ENCODE measurements at regions of chr12 and their contacts with region 1.

Region 1: DNA sequence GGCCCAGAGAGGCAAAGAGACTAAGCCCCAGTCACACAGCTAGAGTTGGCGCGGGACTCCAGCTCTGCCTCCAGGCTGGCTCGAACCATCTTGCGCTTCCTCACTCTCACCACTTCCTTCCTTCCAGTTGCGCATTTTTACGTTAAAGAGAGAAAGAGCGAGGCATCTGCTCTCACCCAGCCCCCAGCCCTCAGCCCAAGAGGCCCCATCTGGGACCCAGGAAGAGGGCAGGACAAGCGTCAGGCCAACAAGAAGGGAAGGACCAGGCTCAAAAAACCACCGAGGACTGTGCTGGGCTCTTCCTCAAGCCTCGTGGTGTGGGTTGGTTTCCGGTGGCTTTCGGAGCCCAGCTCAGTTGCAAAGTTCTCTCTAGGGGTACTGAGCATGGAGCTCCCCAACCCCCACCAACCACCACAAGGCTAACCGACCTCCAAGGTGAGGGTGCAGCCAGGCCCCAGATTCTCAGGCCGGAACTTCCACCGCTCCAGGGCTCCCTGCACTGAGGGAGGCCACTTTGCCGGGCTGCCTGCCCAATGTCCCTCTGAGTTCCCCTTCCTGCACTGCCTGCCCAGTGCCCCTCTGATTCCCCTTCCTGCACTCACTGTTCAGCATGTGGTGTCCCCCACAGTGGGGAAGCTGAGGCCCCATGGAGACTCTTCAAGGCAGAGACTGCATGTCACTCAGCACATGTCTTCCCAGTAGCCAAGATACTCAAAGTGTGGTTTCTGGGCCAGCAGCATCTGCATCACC is 35.9 kb downstream of the TESC start:
- DNase-seq: peak; percentile 12 to 56 (median 38)
- H3K4me3 ChIP-seq: peak overlapping the region; percentile 43
- H3K4me3 Mint-ChIP-seq: peak overlapping the region; percentile 71 to 84 (median 80)
- H3K27ac ChIP-seq: no peak overlapping the region
- H3K27ac Mint-ChIP-seq: peak overlapping the region; percentile 78 to 96 (median 90)
- H3K4me1 ChIP-seq: peaks cover 25% of the 10 kb centered on the region
- H3K4me1 Mint-ChIP-seq: peaks cover 39 to 52% (median 41%) of the 10 kb centered on the region in 3 donors
- H3K27me3 ChIP-seq: no peaks in the 10 kb centered on the region
- H3K27me3 Mint-ChIP-seq: peaks cover 0 to 1% of the 10 kb centered on the region in 2 donors

Region 2: GRCh38 chr12:117098361-117099217 is 35.3 kb after region 1 on chr12:
- CTCF ChIA-PET with region 1: interaction called, 3 read pairs
- POLR2A ChIA-PET with region 1: interaction called, 11 read pairs
- DNase-seq: peak in 3 of 5 donors; percentile 3 to 54 (median 9)
- H3K4me3 ChIP-seq: peak overlapping the region; percentile 64
- H3K4me3 Mint-ChIP-seq: peak overlapping the region; percentile 81 to 94 (median 85)
- H3K27ac ChIP-seq: peak overlapping the region; percentile 54
- H3K27ac Mint-ChIP-seq: peak overlapping the region in 1 of 8 donors; percentile 62
- H3K4me1 ChIP-seq: peaks cover 14% of the 10 kb centered on the region
- H3K4me1 Mint-ChIP-seq: peaks cover 14 to 30% (median 29%) of the 10 kb centered on the region in 3 donors
- H3K27me3 ChIP-seq: no peaks in the 10 kb centered on the region
- H3K27me3 Mint-ChIP-seq: peaks cover 5 to 7% of the 10 kb centered on the region in 2 donors

Region 3: GRCh38 chr12:117125758-117126157 is 62.4 kb after region 1 on chr12:
- CTCF ChIA-PET with region 1: no interaction called
- POLR2A ChIA-PET with region 1: no interaction called
- DNase-seq: peak in 1 of 5 donors; percentile 3
- H3K4me3 ChIP-seq: no peak overlapping the region
- H3K4me3 Mint-ChIP-seq: no peak overlapping the region
- H3K27ac ChIP-seq: no peak overlapping the region
- H3K27ac Mint-ChIP-seq: peak overlapping the region in 1 of 8 donors; percentile 14
- H3K4me1 ChIP-seq: no peaks in the 10 kb centered on the region
- H3K4me1 Mint-ChIP-seq: peaks cover 0 to 1% (median 0%) of the 10 kb centered on the region in 3 donors
- H3K27me3 ChIP-seq: no peaks in the 10 kb centered on the region
- H3K27me3 Mint-ChIP-seq: no peaks in the 10 kb centered on the region